HepG2 (cell line): ENCODE measurements at regions of chr9 and their contacts with region 1.

Region 1: GRCh38 chr9:136118320-136119060 is at the start of gene TMEM250:
- DNase-seq: peak; percentile 92
- ATAC-seq: peak; percentile 73
- H3K4me3 ChIP-seq: peak within 1 kb of the TSS; percentile 60 to 88 (median 83)
- H3K27ac ChIP-seq: peak within 1 kb of the TSS; percentile 96
- H3K4me1 ChIP-seq: peaks cover 40% of the 10 kb centered on the region
- H3K27me3 ChIP-seq: peaks cover 0 to 5% of the 10 kb centered on the region in 2 experiments; a peak in 1 of 5 replicates
- CTCF ChIP-seq: peak; percentile 54
- EP300 ChIP-seq: peak in 1 of 2 experiments; percentile 22; a peak in 1 of 4 replicates
- POLR2A ChIP-seq: no peak; a peak in 1 of 4 replicates
- RAD21 ChIP-seq: peak; percentile 53; the same call in 1 of the 2 replicates
- total RNA-seq, gene TMEM250: 12.0 and 13.9 TPM in 2 replicates

Region 2: DNA sequence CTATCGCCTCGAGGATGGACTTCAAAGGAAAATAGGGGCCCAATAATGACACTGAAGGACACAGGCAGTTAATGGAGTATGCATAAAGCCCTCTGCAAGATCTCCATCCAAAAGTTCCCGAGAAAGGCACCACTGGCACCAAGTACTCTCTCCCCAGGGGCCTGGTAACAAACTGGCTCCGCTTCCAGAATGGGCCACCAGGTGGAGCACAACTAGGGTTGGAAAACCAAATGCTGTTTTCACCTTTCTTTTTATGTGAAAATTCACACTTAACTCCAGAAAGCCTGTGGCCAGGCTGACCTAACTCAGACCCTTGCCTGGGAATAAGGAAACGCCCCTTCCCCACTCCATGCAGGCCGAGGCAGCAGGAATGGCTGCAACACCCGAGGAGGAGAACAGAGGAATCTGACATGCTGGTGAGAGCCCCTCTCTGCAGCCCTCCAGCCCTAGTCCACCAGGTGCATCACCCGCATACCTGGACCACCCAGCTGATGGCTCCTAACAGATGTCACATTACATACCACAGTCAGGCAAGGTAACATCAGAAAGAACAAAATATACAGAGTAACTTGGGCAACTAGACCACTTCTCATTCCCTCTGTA is 253.9 kb before region 1 on chr9:
- CTCF ChIA-PET with region 1: interaction called, 16 read pairs
- POLR2A ChIA-PET with region 1: no interaction called
- in situ Hi-C with region 1: loop called (anchors 10 kb)
- intact Hi-C with region 1: loop called (anchors 2 kb)
- DNase-seq: peak; percentile 10
- ATAC-seq: peak; percentile 77
- H3K4me3 ChIP-seq: no peak overlapping the region
- H3K27ac ChIP-seq: no peak overlapping the region
- H3K4me1 ChIP-seq: no peaks in the 10 kb centered on the region
- H3K27me3 ChIP-seq: no peaks in the 10 kb centered on the region
- CTCF ChIP-seq: peak; percentile 76
- EP300 ChIP-seq: no peak
- POLR2A ChIP-seq: no peak
- RAD21 ChIP-seq: 0 out of 2 replicates have a peak, but pooled peaks have one; percentile 28

Region 3: GRCh38 chr9:135992486-135993408 is 125.7 kb before region 1 on chr9:
- CTCF ChIA-PET with region 1: no interaction called
- POLR2A ChIA-PET with region 1: interaction called, 41 read pairs
- in situ Hi-C with region 1: no loop called
- intact Hi-C with region 1: no loop called
- DNase-seq: peak; percentile 81
- ATAC-seq: peak; percentile 38
- H3K4me3 ChIP-seq: peak overlapping the region; percentile 65 to 88 (median 74)
- H3K27ac ChIP-seq: peak overlapping the region; percentile 98
- H3K4me1 ChIP-seq: peaks cover 72% of the 10 kb centered on the region
- H3K27me3 ChIP-seq: peaks cover 2 to 19% of the 10 kb centered on the region in 2 experiments; a peak in 3 of 5 replicates
- CTCF ChIP-seq: peak; percentile 19
- EP300 ChIP-seq: 0 out of 4 replicates have a peak, but pooled peaks of 1 of the 2 experiments have one; percentile 15
- POLR2A ChIP-seq: peak in 1 of 2 experiments; percentile 65; a peak in 1 of 4 replicates
- RAD21 ChIP-seq: no peak

Region 4: DNA sequence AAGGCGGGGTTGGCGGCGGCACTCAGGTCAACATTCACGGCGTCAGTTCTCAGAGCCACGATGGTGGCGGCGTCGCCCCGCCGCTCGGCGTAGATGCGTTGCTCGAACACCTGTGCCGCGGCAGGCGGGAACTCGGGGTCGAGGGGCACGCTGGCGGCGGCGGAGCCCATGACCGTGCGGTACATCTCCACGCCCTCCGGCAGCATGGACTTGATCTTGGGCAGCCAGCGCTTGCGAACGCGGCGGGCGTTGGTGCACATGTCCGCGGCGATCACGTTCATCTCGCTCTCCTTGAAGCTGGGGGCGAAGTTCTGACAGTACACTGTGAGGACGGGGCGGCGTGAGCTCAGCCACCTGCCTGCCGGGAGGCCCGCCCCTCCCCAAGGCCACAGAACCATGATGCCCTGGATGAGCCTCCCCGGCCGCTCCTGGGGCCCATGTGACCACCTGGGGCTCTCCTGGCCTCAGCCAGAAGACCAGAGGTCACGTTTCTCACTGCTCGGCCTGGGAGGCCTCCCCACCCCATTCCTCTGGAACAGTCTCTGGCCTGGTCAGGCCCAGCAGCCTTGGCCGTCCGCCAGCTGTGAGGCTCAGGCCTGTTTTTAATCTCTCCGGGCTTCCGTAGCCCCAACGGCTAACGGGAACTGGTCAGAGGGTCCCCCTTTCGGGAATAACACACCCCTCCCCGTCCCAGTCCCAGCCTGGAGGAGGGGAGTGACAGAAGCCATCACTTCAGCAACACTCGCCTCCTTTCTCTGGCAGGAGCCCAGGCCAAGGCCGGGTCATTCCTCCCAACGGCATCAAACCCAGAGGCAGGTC is 106.6 kb before region 1 on chr9:
- CTCF ChIA-PET with region 1: no interaction called
- POLR2A ChIA-PET with region 1: interaction called, 14 read pairs
- in situ Hi-C with region 1: no loop called
- intact Hi-C with region 1: loop called (anchors 1 kb)
- DNase-seq: peak; percentile 97
- ATAC-seq: peak; percentile 89
- H3K4me3 ChIP-seq: peak overlapping the region; percentile 28 to 66 (median 38); a peak in 5 of 6 replicates
- H3K27ac ChIP-seq: peak overlapping the region; percentile 88
- H3K4me1 ChIP-seq: peaks cover 93% of the 10 kb centered on the region
- H3K27me3 ChIP-seq: no peaks in the 10 kb centered on the region
- CTCF ChIP-seq: peak; percentile 23
- EP300 ChIP-seq: peak in 1 of 2 experiments; percentile 71; a peak in 2 of 4 replicates
- POLR2A ChIP-seq: peak in 1 of 2 experiments; percentile 55; a peak in 1 of 4 replicates
- RAD21 ChIP-seq: peak; percentile 54

Region 5: DNA sequence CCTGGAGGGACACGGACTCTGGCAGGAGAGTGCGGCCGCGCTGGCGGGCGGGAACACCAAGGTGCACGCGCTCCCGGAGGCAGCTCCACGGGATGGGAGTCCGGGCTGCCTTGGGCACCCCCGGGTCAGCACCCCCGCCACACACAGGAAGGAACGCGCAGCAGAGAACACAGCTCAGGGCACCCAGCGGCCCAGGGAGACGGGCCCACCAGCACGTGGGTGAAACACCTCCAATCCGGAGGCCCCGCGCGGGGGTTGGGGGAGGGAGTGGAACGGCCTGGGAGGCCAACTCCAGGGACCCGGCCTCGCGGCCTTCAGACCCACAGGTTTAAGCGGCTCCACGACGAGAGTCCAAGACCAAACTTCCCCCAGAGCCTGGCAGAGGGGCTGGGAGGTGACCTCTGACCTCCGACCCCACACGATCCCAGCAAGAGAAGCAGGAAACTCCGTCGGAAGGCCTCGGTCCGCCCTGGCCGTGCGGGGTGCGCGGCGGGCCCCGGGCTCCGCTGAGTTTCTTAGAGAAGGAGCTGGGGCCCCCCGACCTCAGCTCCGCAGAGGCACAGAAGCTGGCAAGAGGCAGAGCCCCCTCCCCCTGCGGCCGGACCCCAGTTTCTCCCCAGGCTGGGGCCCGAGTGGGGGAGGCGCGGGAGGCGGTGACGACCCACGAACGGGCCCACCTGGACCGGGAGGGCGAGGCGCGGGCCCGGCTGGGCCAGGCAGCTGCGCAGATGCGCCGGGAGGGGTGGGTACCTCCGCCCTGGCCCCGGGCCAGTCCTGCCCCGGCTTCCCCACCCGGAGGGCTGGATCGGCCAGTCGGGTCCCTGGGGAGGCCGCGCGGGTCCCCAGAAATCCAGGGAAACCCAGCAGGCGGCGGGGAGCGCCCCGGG is 24.3 kb before region 1 on chr9:
- CTCF ChIA-PET with region 1: interaction called, 8 read pairs
- POLR2A ChIA-PET with region 1: interaction called, 23 read pairs
- in situ Hi-C with region 1: no loop called
- intact Hi-C with region 1: no loop called
- DNase-seq: peak; percentile 72
- ATAC-seq: peak; percentile 69
- H3K4me3 ChIP-seq: peak overlapping the region; percentile 74 to 81 (median 81)
- H3K27ac ChIP-seq: peak overlapping the region; percentile 82
- H3K4me1 ChIP-seq: peaks cover 56% of the 10 kb centered on the region
- H3K27me3 ChIP-seq: peaks cover 7 to 20% of the 10 kb centered on the region in 2 experiments; a peak in 4 of 5 replicates
- CTCF ChIP-seq: peak; percentile 31
- EP300 ChIP-seq: no peak; a peak in 1 of 4 replicates
- POLR2A ChIP-seq: peak in 1 of 2 experiments; percentile 57; a peak in 1 of 4 replicates
- RAD21 ChIP-seq: peak; percentile 40